ENCODE measurements at regions of chr15 and their contacts with region 1.

Region 1: GRCh38 chr15:74489518-74490338 is 28.8 kb upstream of the UBL7 start:
- DNase-seq: peak; percentile 81
- CTCF ChIP-seq: peak; percentile 69

Region 2: DNA sequence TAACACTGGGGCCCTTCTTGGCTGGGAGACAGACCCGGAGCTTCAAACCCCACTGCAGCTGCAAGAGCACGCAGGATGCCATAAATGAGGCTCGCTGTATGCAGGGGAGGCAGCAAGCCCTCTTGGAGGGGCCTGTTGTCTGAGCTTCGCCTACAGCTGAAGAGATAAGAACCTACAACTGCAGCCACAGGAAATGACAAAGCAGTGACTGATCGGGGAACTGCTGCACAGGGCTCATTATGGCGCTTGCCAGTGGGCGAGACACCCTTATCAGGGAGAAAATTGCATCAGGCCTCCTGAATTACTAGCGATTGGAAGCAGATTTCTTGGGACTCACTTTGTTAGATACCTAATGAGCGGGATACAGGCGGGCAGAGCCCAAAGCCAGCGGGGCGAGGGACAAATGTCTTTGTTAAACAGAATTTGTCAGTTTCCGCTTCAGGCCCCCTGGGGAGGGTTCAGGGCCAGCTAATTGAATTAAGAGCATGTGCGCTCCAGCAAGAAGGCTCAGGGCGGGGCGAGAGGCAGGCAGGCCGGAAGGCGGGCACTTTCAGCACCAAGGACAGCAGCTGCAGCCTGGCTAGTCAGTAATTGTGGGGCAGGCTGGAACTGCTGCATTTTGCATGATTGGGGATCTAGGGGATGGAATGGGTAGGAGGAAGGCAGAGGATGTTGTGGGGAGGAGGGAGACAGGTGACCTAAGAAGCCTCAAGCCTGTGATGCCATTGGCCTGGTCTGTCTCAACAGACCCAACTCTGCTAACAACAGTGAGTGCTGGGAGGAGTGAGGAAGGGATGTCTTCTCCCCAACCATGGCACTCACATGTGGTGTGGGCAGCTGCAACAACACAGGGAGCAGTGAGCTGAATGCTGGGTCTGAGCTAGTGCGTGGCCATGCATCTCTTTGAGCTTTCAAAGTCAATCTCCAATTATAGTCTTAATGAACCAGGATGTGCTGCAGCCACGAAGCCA is 198.3 kb before region 1 on chr15:
- CTCF ChIA-PET with region 1: no interaction called
- POLR2A ChIA-PET with region 1: no interaction called
- DNase-seq: peak; percentile 87
- CTCF ChIP-seq: no peak

Region 3: GRCh38 chr15:74470631-74471395 is 18.9 kb before region 1 on chr15:
- CTCF ChIA-PET with region 1: interaction called, 10 read pairs
- POLR2A ChIA-PET with region 1: interaction called, 4 read pairs
- DNase-seq: no peak
- CTCF ChIP-seq: no peak

Measured in GM10248 (cell line).